CD4-positive, alpha-beta memory T cell (primary cell): ENCODE measurements at regions of chr11 and their contacts with region 1.

Region 1: DNA sequence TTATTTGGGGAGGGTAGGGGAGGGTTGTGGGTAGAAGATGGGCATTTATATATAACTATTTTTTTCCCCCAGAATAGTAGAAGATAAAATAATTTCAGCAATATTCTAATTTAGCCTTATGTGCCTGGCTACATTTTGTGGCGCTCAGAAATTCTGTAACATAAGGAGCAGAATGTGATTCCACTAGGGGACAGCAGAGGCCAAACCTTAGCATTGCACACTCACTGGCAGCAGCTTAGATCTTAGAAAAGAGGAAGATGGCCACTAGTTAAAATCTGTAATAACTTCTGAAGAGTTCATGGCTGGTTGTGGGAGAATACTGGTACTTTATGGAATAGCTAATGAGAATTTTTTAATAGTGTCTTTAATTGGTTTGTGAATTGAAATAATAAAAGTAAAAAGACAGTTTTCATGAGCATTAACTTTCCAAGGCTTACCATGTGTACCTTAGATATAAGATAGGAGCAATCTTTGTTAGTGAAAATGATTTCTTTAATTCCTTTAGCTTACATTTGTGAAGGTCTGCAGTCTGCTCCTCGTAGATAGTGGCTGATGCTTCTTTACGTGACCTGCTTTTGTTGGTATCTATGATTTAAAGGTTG is 33.1 kb downstream of the DDX10 start:
- DNase-seq: peak in 3 of 5 donors; percentile 3 to 12 (median 6)
- H3K4me3 ChIP-seq: no peak overlapping the region
- H3K4me3 Mint-ChIP-seq: no peak overlapping the region
- H3K27ac ChIP-seq: no peak overlapping the region
- H3K27ac Mint-ChIP-seq: no peak overlapping the region
- H3K4me1 ChIP-seq: no peaks in the 10 kb centered on the region
- H3K4me1 Mint-ChIP-seq: peaks cover 0 to 1% (median 0%) of the 10 kb centered on the region in 4 donors
- H3K27me3 ChIP-seq: no peaks in the 10 kb centered on the region
- H3K27me3 Mint-ChIP-seq: no peaks in the 10 kb centered on the region

Region 2: DNA sequence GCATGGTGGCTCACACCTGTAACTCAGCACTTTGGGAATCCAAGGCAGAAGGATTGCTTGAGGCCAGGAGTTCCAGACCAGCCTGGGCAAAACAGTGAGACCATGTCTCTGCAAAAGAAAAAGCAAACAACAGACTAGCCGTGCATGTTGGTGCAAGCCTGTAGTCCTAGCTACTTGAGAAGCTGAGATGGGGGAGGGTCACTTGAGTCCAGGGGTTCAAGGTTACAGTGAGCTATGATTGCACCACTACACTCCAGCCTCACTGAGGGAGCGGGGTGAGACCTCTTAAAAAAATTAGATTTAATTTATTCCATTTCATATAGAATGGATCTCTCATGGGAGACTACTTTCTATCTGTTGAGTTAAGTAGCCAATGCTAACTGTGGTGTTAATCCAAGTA is 17.3 kb after region 1 on chr11:
- CTCF ChIA-PET with region 1: no interaction called
- POLR2A ChIA-PET with region 1: no interaction called
- intact Hi-C with region 1: no loop called
- DNase-seq: no peak
- H3K4me3 ChIP-seq: no peak overlapping the region
- H3K4me3 Mint-ChIP-seq: no peak overlapping the region
- H3K27ac ChIP-seq: no peak overlapping the region
- H3K27ac Mint-ChIP-seq: no peak overlapping the region
- H3K4me1 ChIP-seq: no peaks in the 10 kb centered on the region
- H3K4me1 Mint-ChIP-seq: peaks cover 3 to 7% (median 7%) of the 10 kb centered on the region in 4 donors
- H3K27me3 ChIP-seq: no peaks in the 10 kb centered on the region
- H3K27me3 Mint-ChIP-seq: no peaks in the 10 kb centered on the region

Region 3: GRCh38 chr11:108871152-108871551 is 173.2 kb after region 1 on chr11:
- CTCF ChIA-PET with region 1: no interaction called
- POLR2A ChIA-PET with region 1: no interaction called
- intact Hi-C with region 1: loop called (anchors 2 kb)
- DNase-seq: no peak
- H3K4me3 ChIP-seq: no peak overlapping the region
- H3K4me3 Mint-ChIP-seq: no peak overlapping the region
- H3K27ac ChIP-seq: no peak overlapping the region
- H3K27ac Mint-ChIP-seq: no peak overlapping the region
- H3K4me1 ChIP-seq: no peaks in the 10 kb centered on the region
- H3K4me1 Mint-ChIP-seq: peaks cover 0 to 4% (median under 1%) of the 10 kb centered on the region in 4 donors
- H3K27me3 ChIP-seq: no peaks in the 10 kb centered on the region
- H3K27me3 Mint-ChIP-seq: no peaks in the 10 kb centered on the region